ENCODE measurements at regions of chr4 and their contacts with region 1.

Region 1: GRCh38 chr4:48727666-48728459 is 52.2 kb downstream of the FRYL start:
- DNase-seq: no peak
- H3K4me3 ChIP-seq: no peak overlapping the region
- H3K27ac ChIP-seq: no peak overlapping the region
- H3K4me1 ChIP-seq: no peaks in the 10 kb centered on the region
- H3K27me3 ChIP-seq: no peaks in the 10 kb centered on the region
- CTCF ChIP-seq: no peak
- POLR2A ChIP-seq: no peak

Region 2: DNA sequence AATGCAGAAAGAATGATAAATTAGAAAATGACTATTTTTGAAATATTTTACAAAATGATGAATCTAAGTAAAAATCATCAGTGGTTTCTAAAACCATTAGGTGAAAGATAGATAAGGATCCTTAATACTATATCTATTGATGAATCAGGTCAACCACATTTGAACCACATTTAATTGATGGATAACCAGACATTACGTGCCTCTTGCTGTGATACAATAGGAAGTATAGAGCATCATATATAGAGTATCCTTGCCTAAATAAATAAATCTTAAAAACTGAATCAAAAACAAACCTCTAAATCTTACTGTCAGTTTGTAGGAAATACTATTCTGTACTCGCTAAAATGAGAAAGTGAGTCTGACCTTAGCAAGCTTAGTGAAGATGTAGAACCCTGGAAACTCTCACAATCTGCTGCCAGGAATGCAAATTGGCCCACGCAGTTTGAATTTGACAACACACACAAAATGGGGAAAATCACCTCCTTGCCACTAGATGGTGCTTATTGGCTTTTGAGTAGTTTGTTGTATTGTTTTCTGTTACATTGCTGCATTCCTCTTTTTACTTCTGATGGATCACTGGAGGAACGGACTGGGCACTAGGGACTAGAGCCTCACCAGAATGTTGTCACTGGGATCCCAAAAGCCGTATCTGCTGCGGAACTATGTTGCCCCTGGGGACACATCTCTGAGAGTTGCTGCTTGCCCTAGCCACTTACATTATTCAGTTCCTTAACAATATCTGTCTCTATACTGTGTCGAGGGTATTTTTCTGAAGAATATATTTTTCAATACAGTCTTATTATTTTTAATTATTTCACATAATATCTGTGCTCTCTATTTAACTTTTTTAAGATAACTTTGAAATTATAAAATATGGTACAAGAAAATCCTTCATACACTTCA is 411.9 kb before region 1 on chr4:
- intact Hi-C with region 1: no loop called
- DNase-seq: no peak
- H3K4me3 ChIP-seq: no peak overlapping the region
- H3K27ac ChIP-seq: no peak overlapping the region
- H3K4me1 ChIP-seq: no peaks in the 10 kb centered on the region
- H3K27me3 ChIP-seq: no peaks in the 10 kb centered on the region
- CTCF ChIP-seq: peak in 2 of 3 donors; percentile 42 to 45
- POLR2A ChIP-seq: no peak

Region 3: DNA sequence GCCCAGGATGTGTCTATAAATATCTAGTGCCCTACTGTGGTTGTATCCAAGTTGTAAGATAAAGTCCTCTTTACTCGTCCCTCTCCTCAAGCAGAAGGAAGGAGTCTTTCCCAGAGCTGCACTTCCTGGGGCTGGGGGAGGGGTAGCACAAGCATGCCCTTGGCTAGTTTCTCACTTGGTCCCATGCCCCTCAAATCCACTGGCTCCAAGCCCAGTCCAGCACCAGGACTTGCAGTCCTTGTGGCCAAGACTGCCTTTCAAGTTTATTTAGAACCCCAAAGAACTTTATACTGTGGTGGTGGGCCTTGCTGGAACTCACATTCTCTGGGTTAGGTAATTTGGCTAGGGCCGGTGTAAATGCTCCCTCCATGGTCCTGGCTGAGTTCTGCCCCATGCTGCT is 287.9 kb before region 1 on chr4:
- intact Hi-C with region 1: loop called (anchors 5 kb)
- DNase-seq: no peak
- H3K4me3 ChIP-seq: no peak overlapping the region
- H3K27ac ChIP-seq: no peak overlapping the region
- H3K4me1 ChIP-seq: no peaks in the 10 kb centered on the region
- H3K27me3 ChIP-seq: no peaks in the 10 kb centered on the region
- CTCF ChIP-seq: no peak
- POLR2A ChIP-seq: no peak

Region 4: GRCh38 chr4:48756689-48757220 is 28.9 kb after region 1 on chr4:
- intact Hi-C with region 1: no loop called
- DNase-seq: no peak
- H3K4me3 ChIP-seq: no peak overlapping the region
- H3K27ac ChIP-seq: no peak overlapping the region
- H3K4me1 ChIP-seq: peaks cover 0 to 5% of the 10 kb centered on the region in 2 donors
- H3K27me3 ChIP-seq: no peaks in the 10 kb centered on the region
- CTCF ChIP-seq: no peak
- POLR2A ChIP-seq: no peak

Measured in breast epithelium (tissue), 4 donors.